ENCODE measurements at regions of chr12 and their contacts with region 1.

Region 1: GRCh38 chr12:96219698-96220206 is 25.6 kb downstream of the ELK3 start:
- DNase-seq: peak; percentile 98 to 99
- ATAC-seq: peak; percentile 97
- H3K4me3 ChIP-seq: peak overlapping the region; percentile 33
- H3K27ac ChIP-seq: peak overlapping the region; percentile 98
- H3K4me1 ChIP-seq: peaks cover 54% of the 10 kb centered on the region
- CTCF ChIP-seq: no peak
- EP300 ChIP-seq: peak in 1 of 2 experiments; percentile 31; a peak in 2 of 5 replicates
- POLR2A ChIP-seq: peak; percentile 75
- RAD21 ChIP-seq: peak; percentile 20 to 29; a peak in 1 of 5 replicates

Region 2: DNA sequence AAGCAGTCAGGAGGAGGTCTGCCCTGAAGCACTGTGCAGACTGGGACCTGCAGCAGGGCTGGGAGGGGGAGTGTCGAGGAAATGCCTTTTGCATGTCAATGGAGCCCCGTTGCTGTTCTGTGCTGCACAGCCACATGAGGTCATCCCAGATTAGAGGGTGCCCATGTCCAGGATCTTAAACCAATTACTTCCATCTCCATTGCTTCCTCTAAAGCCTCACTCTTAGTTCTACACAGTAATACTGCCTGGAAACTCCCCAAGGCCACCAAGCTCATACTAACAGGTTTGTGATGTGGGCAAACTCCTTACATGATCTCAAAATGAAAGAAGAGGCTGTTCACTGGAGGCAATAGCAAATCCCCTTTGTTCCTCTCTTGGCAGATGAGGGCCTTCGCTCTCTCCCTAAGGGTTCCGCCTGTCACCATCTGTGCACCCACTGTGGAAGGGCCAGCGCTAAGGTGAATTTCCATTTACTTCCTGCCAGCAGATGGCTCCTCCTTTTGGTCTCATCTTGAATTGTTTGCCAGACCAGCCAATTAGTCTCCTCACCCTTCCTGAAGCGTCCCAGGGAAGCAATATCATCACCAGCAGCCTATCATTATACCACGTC is 149.0 kb before region 1 on chr12:
- CTCF ChIA-PET with region 1: interaction called, 64 read pairs
- POLR2A ChIA-PET with region 1: no interaction called
- DNase-seq: peak in 1 of 2 experiments; percentile 42
- ATAC-seq: peak; percentile 56 to 69
- H3K4me3 ChIP-seq: no peak overlapping the region
- H3K27ac ChIP-seq: no peak overlapping the region
- H3K4me1 ChIP-seq: peaks cover 23% of the 10 kb centered on the region
- CTCF ChIP-seq: 0 out of 3 replicates have a peak, but pooled peaks have one; percentile 14
- EP300 ChIP-seq: no peak
- POLR2A ChIP-seq: no peak
- RAD21 ChIP-seq: peak in 1 of 2 experiments; percentile 31; a peak in 2 of 5 replicates

Region 3: GRCh38 chr12:96143392-96143791 is 76.4 kb before region 1 on chr12:
- CTCF ChIA-PET with region 1: no interaction called
- POLR2A ChIA-PET with region 1: no interaction called
- DNase-seq: no peak
- ATAC-seq: no peak
- H3K4me3 ChIP-seq: no peak overlapping the region
- H3K27ac ChIP-seq: no peak overlapping the region
- H3K4me1 ChIP-seq: no peaks in the 10 kb centered on the region
- CTCF ChIP-seq: no peak
- EP300 ChIP-seq: no peak
- POLR2A ChIP-seq: no peak
- RAD21 ChIP-seq: no peak

Region 4: GRCh38 chr12:96194971-96195844 is 24.5 kb before region 1 on chr12:
- CTCF ChIA-PET with region 1: interaction called, 17 read pairs
- POLR2A ChIA-PET with region 1: interaction called, 9 read pairs
- DNase-seq: peak; percentile 71 to 82
- ATAC-seq: peak; percentile 52 to 70
- H3K4me3 ChIP-seq: peak overlapping the region; percentile 93
- H3K27ac ChIP-seq: peak overlapping the region; percentile 90 to 94
- H3K4me1 ChIP-seq: peaks cover 38% of the 10 kb centered on the region
- CTCF ChIP-seq: no peak
- EP300 ChIP-seq: no peak
- POLR2A ChIP-seq: no peak
- RAD21 ChIP-seq: no peak

Region 5: GRCh38 chr12:96233168-96233567 is 13.4 kb after region 1 on chr12:
- CTCF ChIA-PET with region 1: interaction called, 13 read pairs
- POLR2A ChIA-PET with region 1: no interaction called
- DNase-seq: no peak
- ATAC-seq: no peak
- H3K4me3 ChIP-seq: no peak overlapping the region
- H3K27ac ChIP-seq: no peak overlapping the region
- H3K4me1 ChIP-seq: peaks cover 7% of the 10 kb centered on the region
- CTCF ChIP-seq: no peak
- EP300 ChIP-seq: no peak
- POLR2A ChIP-seq: no peak
- RAD21 ChIP-seq: no peak

Region 6: GRCh38 chr12:96516472-96517430 is 297.0 kb after region 1 on chr12:
- CTCF ChIA-PET with region 1: interaction called, 27 read pairs
- POLR2A ChIA-PET with region 1: no interaction called
- DNase-seq: peak; percentile 56 to 84
- ATAC-seq: peak; percentile 80 to 90; a peak in 5 of 6 replicates
- H3K4me3 ChIP-seq: no peak overlapping the region
- H3K27ac ChIP-seq: no peak overlapping the region
- H3K4me1 ChIP-seq: peaks cover 9% of the 10 kb centered on the region; the same call in 1 of the 3 replicates
- CTCF ChIP-seq: peak; percentile 90
- EP300 ChIP-seq: no peak
- POLR2A ChIP-seq: no peak
- RAD21 ChIP-seq: peak; percentile 94 to 95